ENCODE measurements at regions of chr10 and their contacts with region 1.

Region 1: GRCh38 chr10:110076559-110077318 is 69.0 kb downstream of the ADD3 start:
- DNase-seq: peak; percentile 41
- H3K4me3 Mint-ChIP-seq: peak overlapping the region; percentile 79
- H3K27ac Mint-ChIP-seq: peak overlapping the region; percentile 95
- H3K4me1 Mint-ChIP-seq: peaks cover 70% of the 10 kb centered on the region
- H3K27me3 Mint-ChIP-seq: no peaks in the 10 kb centered on the region

Region 2: DNA sequence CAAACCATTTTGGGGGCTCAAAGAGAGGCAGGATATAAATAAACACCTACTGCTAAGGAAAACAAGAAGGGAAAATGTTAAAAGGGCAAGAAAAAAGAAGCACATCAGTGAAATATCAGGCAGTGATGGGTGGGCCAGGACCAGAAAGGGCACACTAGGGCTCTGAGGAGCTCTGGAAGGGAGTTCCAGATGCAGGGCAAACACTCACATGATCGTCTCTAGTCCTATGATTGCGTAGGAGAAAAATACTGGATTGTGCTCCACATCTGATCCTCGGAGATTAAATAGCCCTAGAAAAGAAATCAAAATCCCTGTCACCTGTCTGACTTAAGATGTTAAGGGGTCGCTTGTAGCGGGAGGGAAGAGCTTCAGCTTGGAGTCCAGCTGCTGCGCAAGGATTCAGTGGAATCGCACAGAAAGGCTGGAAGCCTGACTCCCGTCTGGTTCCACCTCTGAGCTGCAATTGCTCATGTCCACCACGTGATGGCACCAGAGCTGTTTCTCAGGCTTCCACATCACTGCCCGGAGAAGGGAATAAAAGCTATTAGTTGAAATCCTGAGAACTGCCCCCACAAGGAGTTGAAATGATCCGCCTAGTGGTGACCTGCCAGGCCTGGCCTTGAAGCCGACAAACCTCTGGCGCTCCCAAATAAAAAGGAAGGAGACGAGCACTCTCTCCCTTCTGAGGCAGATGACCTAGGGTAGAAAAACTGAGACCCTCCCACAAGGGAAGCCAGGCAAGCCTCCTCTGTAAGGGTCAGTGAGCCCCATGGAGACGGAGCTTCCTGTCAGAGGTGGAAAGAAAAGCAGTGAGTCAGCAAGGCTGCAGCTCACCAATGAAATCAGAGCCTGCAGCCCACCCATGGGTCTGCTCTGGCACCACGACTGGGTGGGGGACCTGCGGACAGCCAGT is 192.6 kb before region 1 on chr10:
- intact Hi-C with region 1: loop called (anchors 10 kb)
- DNase-seq: peak; percentile 43
- H3K4me3 Mint-ChIP-seq: no peak overlapping the region
- H3K27ac Mint-ChIP-seq: no peak overlapping the region
- H3K4me1 Mint-ChIP-seq: peaks cover 10% of the 10 kb centered on the region
- H3K27me3 Mint-ChIP-seq: no peaks in the 10 kb centered on the region

Region 3: GRCh38 chr10:110022716-110023504 is 53.8 kb before region 1 on chr10:
- intact Hi-C with region 1: no loop called
- DNase-seq: no peak
- H3K4me3 Mint-ChIP-seq: no peak overlapping the region
- H3K27ac Mint-ChIP-seq: no peak overlapping the region
- H3K4me1 Mint-ChIP-seq: peaks cover 32% of the 10 kb centered on the region
- H3K27me3 Mint-ChIP-seq: no peaks in the 10 kb centered on the region

Region 4: DNA sequence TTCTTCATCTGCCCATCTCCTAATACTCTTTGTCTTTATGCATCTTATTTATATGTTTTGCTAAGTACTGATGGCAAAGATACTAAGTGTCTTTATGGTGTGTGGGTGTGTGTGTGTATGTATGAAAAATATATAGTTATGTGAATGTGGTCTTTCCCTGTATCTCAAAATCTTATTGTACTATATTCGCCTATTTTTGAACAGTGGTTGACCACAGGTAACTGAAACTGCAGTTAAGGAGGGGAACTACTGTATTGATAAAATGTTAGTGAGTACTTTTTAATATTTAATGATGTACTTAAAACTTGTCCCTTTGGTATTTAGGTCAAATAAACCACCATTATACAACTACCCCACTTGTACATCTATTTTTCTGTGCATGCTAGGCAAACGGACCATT is 17.0 kb after region 1 on chr10:
- intact Hi-C with region 1: loop called (anchors 2 kb)
- DNase-seq: no peak
- H3K4me3 Mint-ChIP-seq: no peak overlapping the region
- H3K27ac Mint-ChIP-seq: no peak overlapping the region
- H3K4me1 Mint-ChIP-seq: peaks cover 16% of the 10 kb centered on the region
- H3K27me3 Mint-ChIP-seq: no peaks in the 10 kb centered on the region

Region 5: GRCh38 chr10:110425684-110426293 is 349.1 kb after region 1 on chr10:
- intact Hi-C with region 1: no loop called
- DNase-seq: peak; percentile 34
- H3K4me3 Mint-ChIP-seq: peak overlapping the region; percentile 28
- H3K27ac Mint-ChIP-seq: peak overlapping the region; percentile 85
- H3K4me1 Mint-ChIP-seq: peaks cover 60% of the 10 kb centered on the region
- H3K27me3 Mint-ChIP-seq: no peaks in the 10 kb centered on the region

Region 6: DNA sequence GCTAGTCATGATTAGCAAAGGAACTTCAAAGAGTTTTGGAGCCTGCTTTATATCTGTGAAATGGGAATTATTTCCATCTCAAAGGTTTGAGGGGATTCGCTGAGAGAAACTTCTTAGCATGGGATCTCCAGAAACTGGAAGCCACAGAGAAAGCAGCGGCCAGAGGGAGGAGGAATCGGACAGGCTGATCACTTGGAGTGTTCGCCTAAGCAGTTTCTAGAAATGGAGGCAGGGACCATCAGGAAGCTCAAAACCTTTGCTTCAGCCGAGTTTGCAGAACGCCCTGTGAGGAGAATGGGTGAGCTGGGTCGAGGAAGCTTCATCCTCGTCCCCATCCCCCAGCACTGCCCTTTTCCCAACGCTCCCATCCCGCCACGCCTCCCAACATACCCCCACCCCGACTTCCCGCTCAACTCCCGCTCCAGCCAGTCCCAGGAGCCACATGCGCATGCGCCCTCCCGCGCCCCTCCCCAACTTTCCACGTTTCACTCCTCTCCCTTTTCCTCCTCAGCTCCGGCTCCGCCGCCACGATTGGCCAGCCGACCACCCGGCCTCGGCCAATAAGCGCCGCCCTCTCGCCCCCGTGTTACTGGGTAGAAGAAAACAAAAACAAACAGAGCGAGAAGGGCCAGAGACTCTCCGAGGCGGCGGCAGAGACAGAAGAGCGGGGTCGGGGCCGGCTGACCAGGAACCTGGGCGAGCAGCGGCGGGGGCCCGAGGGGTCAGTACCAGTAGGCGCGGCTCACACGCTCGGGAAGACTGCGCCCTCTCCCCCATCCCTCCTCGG is 794.8 kb after region 1 on chr10 and contains the start of gene PDCD4:
- intact Hi-C with region 1: no loop called
- DNase-seq: peak; percentile 94
- H3K4me3 Mint-ChIP-seq: peak within 1 kb of the TSS; percentile 91
- H3K27ac Mint-ChIP-seq: peak within 1 kb of the TSS; percentile 97
- H3K4me1 Mint-ChIP-seq: peaks cover 46% of the 10 kb centered on the region
- H3K27me3 Mint-ChIP-seq: no peaks in the 10 kb centered on the region
- total RNA-seq, gene PDCD4: 60.4 and 67.7 TPM in 2 replicates